Dorsolateral prefrontal cortex (tissue), 120 donors: ENCODE measurements at regions of chr1 and their contacts with region 1.

Region 1: DNA sequence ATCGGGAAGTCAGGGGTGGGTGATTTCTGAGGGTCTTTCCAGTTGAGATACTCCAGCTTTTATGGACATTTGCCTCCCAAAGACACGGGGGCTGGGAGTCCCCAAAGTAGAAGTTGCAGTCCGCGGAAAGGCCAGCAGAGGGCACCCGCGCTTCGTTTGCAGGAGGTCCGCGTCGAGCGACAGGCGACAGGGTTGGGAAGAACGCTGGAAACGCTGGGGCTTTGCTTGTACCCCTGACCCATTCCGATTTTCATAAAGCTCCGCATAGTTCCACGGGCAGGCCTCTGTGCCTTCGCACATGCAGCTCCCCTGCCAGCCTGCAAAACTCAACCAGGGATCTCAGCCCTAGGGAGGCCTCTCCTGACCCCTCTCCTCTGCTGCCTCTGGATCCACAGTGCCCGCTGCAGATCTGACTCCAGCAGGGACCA is 44.2 kb upstream of the LAPTM5 start:
- DNase-seq: peak; percentile 78 to 93 (median 88)
- H3K4me3 ChIP-seq: peak overlapping the region in 50 of 59 donors; percentile 8 to 60 (median 39)
- H3K27ac ChIP-seq: peak overlapping the region in 26 of 59 donors; percentile 1 to 84 (median 55)
- H3K27me3 ChIP-seq: no peaks in the 10 kb centered on the region
- CTCF ChIP-seq: peak; percentile 74 to 99 (median 97)

Region 2: GRCh38 chr1:30754684-30755171 is 47.1 kb before region 1 on chr1:
- intact Hi-C with region 1: no loop called
- DNase-seq: no peak
- H3K4me3 ChIP-seq: peak overlapping the region in 24 of 59 donors; percentile 0 to 53 (median 40)
- H3K27ac ChIP-seq: peak overlapping the region in 5 of 59 donors; percentile 6 to 89 (median 19)
- H3K27me3 ChIP-seq: no peaks in the 10 kb centered on the region
- CTCF ChIP-seq: no peak

Region 3: GRCh38 chr1:30852026-30852425 is 50.2 kb after region 1 on chr1:
- intact Hi-C with region 1: loop called in 1 of 2 experiments (anchors 2 kb)
- DNase-seq: no peak
- H3K4me3 ChIP-seq: no peak overlapping the region
- H3K27ac ChIP-seq: peak overlapping the region in 9 of 59 donors; percentile 18 to 56 (median 39)
- H3K27me3 ChIP-seq: no peaks in the 10 kb centered on the region
- CTCF ChIP-seq: no peak

Region 4: DNA sequence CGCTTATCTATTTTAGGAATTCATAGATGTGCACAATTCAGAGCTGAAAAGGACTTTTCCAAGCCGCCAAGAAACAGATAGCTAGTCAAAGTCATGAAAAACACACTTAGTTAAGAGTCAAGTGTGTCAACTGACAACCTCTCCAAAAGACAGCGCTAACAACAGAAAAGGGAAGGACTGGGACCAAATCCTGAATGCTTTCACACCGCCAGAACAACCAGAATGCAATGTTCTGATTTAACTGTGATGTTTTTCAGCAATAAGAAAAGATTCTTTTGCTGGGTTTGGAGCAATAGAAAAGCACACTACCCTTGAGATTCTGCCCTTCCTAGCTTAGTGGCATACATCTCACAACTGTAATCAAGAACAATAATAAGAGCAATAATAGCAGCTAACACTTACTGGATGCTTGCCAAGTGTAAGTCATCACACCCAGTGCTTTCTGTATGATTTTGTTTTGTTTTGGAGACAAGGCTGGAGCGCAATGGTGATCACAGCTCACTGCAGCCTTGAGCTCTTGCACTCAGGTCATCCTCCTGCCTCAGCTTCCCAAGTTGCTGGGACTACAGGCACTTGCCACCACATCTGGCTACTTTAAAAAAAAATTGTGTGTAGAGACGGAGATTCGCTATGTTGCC is 140.7 kb after region 1 on chr1:
- intact Hi-C with region 1: no loop called
- DNase-seq: no peak
- H3K4me3 ChIP-seq: no peak overlapping the region
- H3K27ac ChIP-seq: peak overlapping the region in 31 of 59 donors; percentile 1 to 69 (median 27)
- H3K27me3 ChIP-seq: no peaks in the 10 kb centered on the region
- CTCF ChIP-seq: no peak